ENCODE measurements at regions of chr17 and their contacts with region 1.

Region 1: DNA sequence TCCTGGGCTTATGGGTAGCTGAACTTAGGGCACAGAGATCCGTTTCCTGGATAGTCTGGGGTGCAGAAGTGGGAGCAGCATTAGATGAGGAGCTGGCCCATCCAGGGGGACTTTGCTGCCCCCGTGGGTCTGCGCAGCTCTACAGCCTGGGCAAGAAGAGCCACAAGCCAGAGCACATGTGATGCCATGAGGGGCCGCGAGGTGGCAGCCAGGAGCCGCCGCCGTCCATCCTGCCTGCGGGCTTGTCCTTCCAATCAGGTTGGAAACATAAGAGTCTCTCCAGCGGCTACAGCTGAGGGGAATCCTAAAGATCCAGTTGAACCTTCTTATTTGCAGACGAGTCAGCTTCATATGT is 21.9 kb downstream of the C1QTNF1 start:
- DNase-seq: peak; percentile 75 to 76
- ATAC-seq: peak; percentile 75 to 98 (median 95)
- H3K4me3 ChIP-seq: no peak overlapping the region
- H3K4me3 Mint-ChIP-seq: no peak overlapping the region
- H3K27ac ChIP-seq: no peak overlapping the region
- H3K27ac Mint-ChIP-seq: no peak overlapping the region
- H3K4me1 ChIP-seq: no peaks in the 10 kb centered on the region
- H3K4me1 Mint-ChIP-seq: peaks cover 0 to 10% of the 10 kb centered on the region in 2 donors
- H3K27me3 ChIP-seq: peaks cover 5% of the 10 kb centered on the region
- H3K27me3 Mint-ChIP-seq: peaks cover 7 to 18% of the 10 kb centered on the region in 2 donors
- CTCF ChIP-seq: peak; percentile 94

Region 2: DNA sequence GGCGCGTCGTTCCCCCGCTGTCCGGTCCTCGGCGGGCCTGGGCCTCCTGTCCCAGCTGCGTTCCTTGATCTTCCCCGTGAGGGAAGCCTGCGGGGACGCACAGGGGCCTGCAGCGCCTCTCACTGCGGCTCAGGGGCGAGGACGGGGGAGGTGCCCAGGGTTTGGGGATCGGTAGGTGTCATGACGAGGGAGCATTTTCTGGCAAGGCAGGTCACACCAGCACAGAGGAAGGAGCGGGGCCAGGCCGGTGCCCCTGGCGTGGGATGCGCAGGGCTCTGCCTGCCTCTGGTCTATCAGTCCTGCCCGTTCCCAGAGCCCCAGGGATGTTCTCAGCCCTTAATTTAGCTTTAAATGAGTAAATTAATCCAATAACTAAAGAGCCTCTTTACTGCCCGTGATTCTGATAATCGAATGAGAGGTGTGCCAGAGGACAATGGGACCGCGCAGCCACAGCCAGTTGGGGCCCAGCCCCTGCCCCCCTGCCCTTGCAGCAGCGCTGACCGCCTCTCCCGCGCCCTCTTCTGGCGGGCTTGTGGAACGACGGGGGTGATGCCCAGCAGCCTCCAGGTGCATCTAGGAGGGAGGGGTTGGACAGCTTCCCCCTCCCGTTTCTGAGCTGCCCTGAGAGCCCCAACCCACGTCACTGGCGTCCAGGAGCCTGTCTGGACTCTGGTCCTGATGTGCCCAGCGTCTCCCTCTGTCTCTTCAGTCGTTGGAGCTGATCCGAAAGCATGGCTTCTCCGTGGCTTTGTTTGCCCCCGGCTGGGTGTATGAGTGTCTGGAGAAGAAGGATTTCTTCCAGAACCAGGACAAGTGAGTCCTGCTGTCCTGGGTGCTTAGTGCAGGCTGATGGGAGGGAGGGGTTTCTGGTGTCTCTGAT is 36.7 kb after region 1 on chr17:
- intact Hi-C with region 1: loop called (anchors 1 kb)
- DNase-seq: peak; percentile 38 to 71
- ATAC-seq: peak; percentile 33 to 73 (median 66)
- H3K4me3 ChIP-seq: no peak overlapping the region
- H3K4me3 Mint-ChIP-seq: no peak overlapping the region
- H3K27ac ChIP-seq: no peak overlapping the region
- H3K27ac Mint-ChIP-seq: no peak overlapping the region
- H3K4me1 ChIP-seq: no peaks in the 10 kb centered on the region
- H3K4me1 Mint-ChIP-seq: peaks cover 0 to 5% of the 10 kb centered on the region in 2 donors
- H3K27me3 ChIP-seq: no peaks in the 10 kb centered on the region
- H3K27me3 Mint-ChIP-seq: no peaks in the 10 kb centered on the region
- CTCF ChIP-seq: peak; percentile 66

Region 3: GRCh38 chr17:79391808-79392233 is 346.0 kb after region 1 on chr17:
- intact Hi-C with region 1: loop called (anchors 1 kb)
- DNase-seq: peak; percentile 52 to 82
- ATAC-seq: peak in 2 of 3 donors; percentile 70 to 75
- H3K4me3 ChIP-seq: no peak overlapping the region
- H3K4me3 Mint-ChIP-seq: no peak overlapping the region
- H3K27ac ChIP-seq: no peak overlapping the region
- H3K27ac Mint-ChIP-seq: no peak overlapping the region
- H3K4me1 ChIP-seq: peaks cover 5% of the 10 kb centered on the region
- H3K4me1 Mint-ChIP-seq: peaks cover 0 to 24% of the 10 kb centered on the region in 2 donors
- H3K27me3 ChIP-seq: peaks cover 5% of the 10 kb centered on the region
- H3K27me3 Mint-ChIP-seq: peaks cover 15 to 40% of the 10 kb centered on the region in 2 donors
- CTCF ChIP-seq: peak; percentile 84

Region 4: GRCh38 chr17:79707931-79708891 is 662.4 kb after region 1 on chr17:
- intact Hi-C with region 1: loop called (anchors 5 kb)
- DNase-seq: peak; percentile 57 to 78
- ATAC-seq: peak; percentile 73 to 86 (median 78)
- H3K4me3 ChIP-seq: no peak overlapping the region
- H3K4me3 Mint-ChIP-seq: peak overlapping the region; percentile 49
- H3K27ac ChIP-seq: no peak overlapping the region
- H3K27ac Mint-ChIP-seq: peak overlapping the region in 1 of 2 donors; percentile 33
- H3K4me1 ChIP-seq: peaks cover 11% of the 10 kb centered on the region
- H3K4me1 Mint-ChIP-seq: peaks cover 0 to 5% of the 10 kb centered on the region in 2 donors
- H3K27me3 ChIP-seq: no peaks in the 10 kb centered on the region
- H3K27me3 Mint-ChIP-seq: no peaks in the 10 kb centered on the region
- CTCF ChIP-seq: peak; percentile 81

Measured in natural killer cell (primary cell).